ENCODE measurements at regions of chr2 and their contacts with region 1.

Region 1: DNA sequence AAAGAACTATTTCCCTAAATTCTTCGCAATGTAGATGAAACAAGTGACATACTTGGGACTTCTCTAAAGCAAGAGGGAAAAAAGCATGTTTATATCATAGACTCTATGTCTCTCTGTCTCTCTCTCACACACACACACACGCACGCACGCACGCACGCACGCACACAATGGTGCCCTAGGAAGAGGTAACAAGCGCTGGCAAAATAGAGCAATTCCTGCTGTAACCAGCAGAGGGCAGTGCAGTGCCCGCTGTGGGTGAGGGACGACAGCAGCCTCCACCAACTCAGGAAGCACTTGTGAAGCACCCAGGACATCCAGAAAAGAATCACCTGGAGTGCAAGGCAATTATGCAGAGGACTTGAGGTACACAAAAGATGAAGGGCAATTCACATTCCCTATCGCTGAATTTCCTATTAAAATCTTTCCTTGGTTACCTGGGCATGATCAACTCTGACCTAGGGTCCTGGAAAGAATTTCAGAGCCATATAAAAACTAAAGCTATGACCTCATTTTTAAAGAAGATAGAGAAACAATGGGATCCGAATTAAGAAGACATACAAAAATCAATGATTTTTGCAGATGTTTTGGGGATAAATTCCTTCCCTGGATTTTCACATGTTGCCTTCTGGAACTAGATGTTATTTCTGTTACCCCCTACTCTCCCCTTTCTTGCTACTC is 166.4 kb downstream of the PDE11A start:
- DNase-seq: peak; percentile 80
- H3K4me3 Mint-ChIP-seq: no peak overlapping the region
- H3K27ac Mint-ChIP-seq: no peak overlapping the region
- H3K4me1 Mint-ChIP-seq: no peaks in the 10 kb centered on the region
- H3K27me3 Mint-ChIP-seq: peaks cover 2% of the 10 kb centered on the region

Region 2: GRCh38 chr2:177772529-177772928 is 133.7 kb before region 1 on chr2:
- CTCF ChIA-PET with region 1: interaction called, 3 read pairs
- intact Hi-C with region 1: loop called (anchors 5 kb)
- DNase-seq: peak; percentile 33
- H3K4me3 Mint-ChIP-seq: no peak overlapping the region
- H3K27ac Mint-ChIP-seq: no peak overlapping the region
- H3K4me1 Mint-ChIP-seq: no peaks in the 10 kb centered on the region
- H3K27me3 Mint-ChIP-seq: no peaks in the 10 kb centered on the region

Region 3: GRCh38 chr2:177857538-177857937 is 48.6 kb before region 1 on chr2:
- CTCF ChIA-PET with region 1: no interaction called
- intact Hi-C with region 1: no loop called
- DNase-seq: no peak
- H3K4me3 Mint-ChIP-seq: no peak overlapping the region
- H3K27ac Mint-ChIP-seq: no peak overlapping the region
- H3K4me1 Mint-ChIP-seq: no peaks in the 10 kb centered on the region
- H3K27me3 Mint-ChIP-seq: peaks cover 3% of the 10 kb centered on the region

Region 4: GRCh38 chr2:178008636-178009289 is 102.6 kb after region 1 on chr2:
- CTCF ChIA-PET with region 1: no interaction called
- intact Hi-C with region 1: no loop called
- DNase-seq: no peak
- H3K4me3 Mint-ChIP-seq: no peak overlapping the region
- H3K27ac Mint-ChIP-seq: no peak overlapping the region
- H3K4me1 Mint-ChIP-seq: no peaks in the 10 kb centered on the region
- H3K27me3 Mint-ChIP-seq: peaks cover 11% of the 10 kb centered on the region

Measured in activated naive CD4-positive, alpha-beta T cell treated with anti-CD3 and anti-CD28 coated beads for 36 hours (primary cell).